CD4-positive, alpha-beta memory T cell (primary cell): ENCODE measurements at regions of chr1 and their contacts with region 1.

Region 1: DNA sequence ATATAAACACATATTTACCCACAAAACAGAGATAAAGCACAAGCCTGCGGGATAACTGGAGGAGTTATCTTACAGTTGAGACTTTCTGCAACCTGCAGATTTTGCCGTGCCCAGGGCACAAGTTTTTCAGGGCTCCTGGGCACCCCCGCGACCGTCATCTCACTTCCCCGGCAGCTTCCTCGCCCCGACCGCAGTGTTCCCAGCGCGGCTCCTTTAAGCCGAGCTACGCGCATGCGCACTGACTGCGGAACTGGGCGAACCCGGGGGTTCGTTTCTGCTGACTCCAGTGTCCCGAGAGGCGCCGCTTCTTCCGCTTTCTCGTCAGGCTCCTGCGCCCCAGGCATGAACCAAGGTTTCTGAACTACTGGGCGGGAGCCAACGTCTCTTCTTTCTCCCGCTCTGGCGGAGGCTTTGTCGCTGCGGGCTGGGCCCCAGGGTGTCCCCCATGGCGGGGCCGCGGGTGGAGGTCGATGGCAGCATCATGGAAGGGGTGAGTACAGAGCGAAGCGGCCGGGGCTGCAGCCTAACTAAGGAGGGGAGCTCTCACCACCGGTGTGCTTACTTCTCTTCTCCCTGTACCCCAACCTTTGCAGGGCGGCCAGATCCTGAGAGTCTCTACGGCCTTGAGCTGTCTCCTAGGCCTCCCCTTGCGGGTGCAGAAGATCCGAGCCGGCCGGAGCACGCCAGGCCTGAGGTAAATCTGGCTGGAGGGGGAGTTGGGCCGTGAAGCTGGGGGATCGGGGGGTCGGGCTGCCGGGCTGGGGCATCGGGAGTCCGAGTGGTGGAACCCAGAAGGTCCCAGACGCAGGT is at the start of gene RTCA:
- DNase-seq: peak; percentile 93 to 97 (median 94)
- H3K4me3 ChIP-seq: peak within 1 kb of the TSS; percentile 77
- H3K4me3 Mint-ChIP-seq: peak within 1 kb of the TSS; percentile 99 to 100 (median 100)
- H3K27ac ChIP-seq: peak within 1 kb of the TSS; percentile 78
- H3K27ac Mint-ChIP-seq: peak within 1 kb of the TSS; percentile 96 to 99 (median 98)
- H3K4me1 ChIP-seq: peaks cover 44% of the 10 kb centered on the region
- H3K4me1 Mint-ChIP-seq: peaks cover 19 to 58% (median 39%) of the 10 kb centered on the region in 4 donors
- H3K27me3 ChIP-seq: no peaks in the 10 kb centered on the region
- H3K27me3 Mint-ChIP-seq: no peaks in the 10 kb centered on the region
- total RNA-seq, gene RTCA: 39.7 to 41.4 TPM

Region 2: DNA sequence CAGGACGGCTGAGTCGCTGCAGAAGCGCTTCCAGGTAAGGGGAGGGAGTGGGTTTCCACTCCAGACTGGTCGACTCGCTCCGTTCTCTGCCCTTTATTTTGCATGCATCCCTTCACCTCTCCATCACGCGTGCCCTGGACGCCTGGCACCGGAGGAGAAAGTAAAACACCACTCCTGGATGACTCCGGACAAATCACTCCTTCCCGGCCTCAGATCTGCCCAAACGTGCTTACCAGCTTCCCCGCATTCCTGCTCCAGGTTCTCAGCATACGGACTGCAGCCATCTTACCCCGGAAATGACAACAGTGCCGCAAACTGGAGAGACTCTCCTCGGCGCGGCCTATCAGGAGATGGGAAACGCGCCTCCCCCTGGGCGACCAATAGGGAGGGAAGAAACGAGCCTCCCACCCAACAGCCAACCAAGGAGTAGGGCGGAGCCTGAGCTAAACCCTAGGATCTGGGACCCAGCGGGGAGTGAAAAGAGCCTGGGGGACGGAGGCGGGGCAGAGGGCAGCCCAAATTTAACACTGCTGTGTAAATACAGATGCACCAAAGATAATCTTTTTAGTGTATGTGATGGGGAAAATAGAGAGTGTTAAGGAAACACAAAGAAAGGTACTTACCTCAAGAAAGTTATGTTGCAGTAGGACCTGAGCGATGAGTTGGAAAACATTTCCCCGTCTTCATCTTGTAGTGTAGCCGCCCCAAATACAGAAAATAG is 16.4 kb before region 1 on chr1 and contains the start of gene DBT:
- CTCF ChIA-PET with region 1: interaction called, 11 read pairs
- POLR2A ChIA-PET with region 1: interaction called, 63 read pairs
- intact Hi-C with region 1: loop called (anchors 1 kb)
- DNase-seq: peak; percentile 88 to 96 (median 89)
- H3K4me3 ChIP-seq: peak within 1 kb of the TSS; percentile 93 to 95
- H3K4me3 Mint-ChIP-seq: no peak within 1 kb of the TSS
- H3K27ac ChIP-seq: peak within 1 kb of the TSS; percentile 76
- H3K27ac Mint-ChIP-seq: peak within 1 kb of the TSS in 1 of 7 donors; percentile 58
- H3K4me1 ChIP-seq: peaks cover 34% of the 10 kb centered on the region
- H3K4me1 Mint-ChIP-seq: peaks cover 11 to 20% (median 16%) of the 10 kb centered on the region in 4 donors
- H3K27me3 ChIP-seq: no peaks in the 10 kb centered on the region
- H3K27me3 Mint-ChIP-seq: no peaks in the 10 kb centered on the region
- total RNA-seq, gene DBT: 16.1 to 16.8 TPM

Region 3: GRCh38 chr1:100343897-100344296 is 77.8 kb after region 1 on chr1:
- CTCF ChIA-PET with region 1: no interaction called
- POLR2A ChIA-PET with region 1: no interaction called
- intact Hi-C with region 1: no loop called
- DNase-seq: no peak
- H3K4me3 ChIP-seq: no peak overlapping the region
- H3K4me3 Mint-ChIP-seq: no peak overlapping the region
- H3K27ac ChIP-seq: no peak overlapping the region
- H3K27ac Mint-ChIP-seq: no peak overlapping the region
- H3K4me1 ChIP-seq: no peaks in the 10 kb centered on the region
- H3K4me1 Mint-ChIP-seq: peaks cover 0 to 3% (median 0%) of the 10 kb centered on the region in 4 donors
- H3K27me3 ChIP-seq: no peaks in the 10 kb centered on the region
- H3K27me3 Mint-ChIP-seq: no peaks in the 10 kb centered on the region